Left colon (tissue), 2 donors: ENCODE measurements at regions of chr2 and their contacts with region 1.

Region 1: DNA sequence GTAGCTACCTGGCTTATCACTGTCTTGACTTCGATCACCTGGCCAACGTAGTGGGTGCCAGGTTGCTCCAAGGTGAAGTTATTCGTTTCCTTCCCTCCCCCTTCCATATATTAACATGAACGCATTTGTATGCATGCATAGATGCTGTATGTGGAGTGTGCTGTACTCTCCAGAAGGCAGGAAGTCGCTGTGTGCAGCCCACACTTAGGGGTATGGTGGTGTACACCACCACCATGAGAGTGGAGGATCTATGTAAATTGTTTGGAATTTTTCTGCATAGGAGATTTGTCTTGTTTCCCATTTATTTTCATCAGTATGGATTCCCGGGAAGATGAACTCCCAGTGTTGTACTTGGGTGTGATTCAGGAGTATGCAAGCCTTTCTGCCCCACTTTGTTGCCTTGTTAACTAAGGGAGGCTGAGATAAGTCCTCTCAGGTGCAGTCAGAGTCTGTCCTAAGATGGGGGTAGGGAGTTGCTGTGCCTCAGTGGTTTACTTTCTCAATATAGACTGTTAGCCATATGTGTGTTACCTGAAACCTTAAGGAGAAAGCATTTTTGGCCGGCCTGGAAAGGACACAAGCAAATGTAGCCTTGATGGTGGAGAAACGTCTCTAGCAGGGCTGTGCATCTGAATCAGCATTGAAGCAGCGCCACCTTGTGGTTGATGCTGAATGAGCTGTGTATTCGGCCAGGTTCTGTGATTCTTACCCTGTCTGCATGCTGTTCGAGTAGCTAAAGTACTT is 149.8 kb downstream of the TANC1 start:
- DNase-seq: peak; percentile 75 to 93
- ATAC-seq: peak; percentile 92

Region 2: DNA sequence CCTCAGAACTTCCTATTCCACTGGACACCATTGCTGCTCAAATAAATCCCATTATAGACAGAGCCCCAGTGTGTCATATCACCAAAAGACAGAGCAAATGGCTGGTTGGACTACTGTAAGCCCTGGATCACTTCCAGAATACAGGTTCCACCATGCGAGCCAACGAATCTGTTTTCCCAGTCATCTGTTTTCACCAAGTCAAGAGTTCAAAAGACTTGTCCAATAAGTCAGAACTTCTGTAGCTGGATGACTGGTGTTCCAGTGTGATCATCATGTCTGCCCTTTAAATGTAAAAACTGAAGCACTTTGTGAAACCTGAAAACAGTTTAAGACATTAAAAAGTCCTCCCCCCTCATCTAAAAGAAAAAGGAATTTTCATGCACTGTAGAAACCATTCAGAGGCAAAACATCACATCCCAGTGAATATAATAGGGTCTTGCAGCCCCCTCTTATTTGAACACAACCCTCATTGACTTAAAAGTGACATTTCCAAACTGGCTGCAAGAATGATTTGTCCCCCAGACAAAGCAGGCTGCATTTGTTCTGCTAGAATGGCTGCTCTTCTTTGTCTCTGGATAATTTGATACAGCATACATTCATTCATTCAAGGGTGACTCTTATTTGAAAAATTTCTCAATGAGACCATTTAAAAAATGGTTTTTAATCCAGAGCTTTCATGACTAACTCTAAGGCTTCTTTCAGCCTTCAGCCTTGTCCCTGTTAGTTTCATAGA is 214.4 kb before region 1 on chr2:
- intact Hi-C with region 1: loop called in 1 of 2 experiments (anchors 5 kb)
- DNase-seq: no peak
- ATAC-seq: no peak

Region 3: GRCh38 chr2:160075171-160075570 is 956.9 kb after region 1 on chr2:
- intact Hi-C with region 1: no loop called
- DNase-seq: peak in 1 of 2 donors; percentile 45
- ATAC-seq: peak; percentile 36